Head of caudate nucleus (tissue), 42 donors: ENCODE measurements at regions of chr4 and their contacts with region 1.

Region 1: GRCh38 chr4:52376132-52376704 is 282.9 kb downstream of the USP46 start:
- DNase-seq: peak in 18 of 42 donors; percentile 7 to 70 (median 40)

Region 2: DNA sequence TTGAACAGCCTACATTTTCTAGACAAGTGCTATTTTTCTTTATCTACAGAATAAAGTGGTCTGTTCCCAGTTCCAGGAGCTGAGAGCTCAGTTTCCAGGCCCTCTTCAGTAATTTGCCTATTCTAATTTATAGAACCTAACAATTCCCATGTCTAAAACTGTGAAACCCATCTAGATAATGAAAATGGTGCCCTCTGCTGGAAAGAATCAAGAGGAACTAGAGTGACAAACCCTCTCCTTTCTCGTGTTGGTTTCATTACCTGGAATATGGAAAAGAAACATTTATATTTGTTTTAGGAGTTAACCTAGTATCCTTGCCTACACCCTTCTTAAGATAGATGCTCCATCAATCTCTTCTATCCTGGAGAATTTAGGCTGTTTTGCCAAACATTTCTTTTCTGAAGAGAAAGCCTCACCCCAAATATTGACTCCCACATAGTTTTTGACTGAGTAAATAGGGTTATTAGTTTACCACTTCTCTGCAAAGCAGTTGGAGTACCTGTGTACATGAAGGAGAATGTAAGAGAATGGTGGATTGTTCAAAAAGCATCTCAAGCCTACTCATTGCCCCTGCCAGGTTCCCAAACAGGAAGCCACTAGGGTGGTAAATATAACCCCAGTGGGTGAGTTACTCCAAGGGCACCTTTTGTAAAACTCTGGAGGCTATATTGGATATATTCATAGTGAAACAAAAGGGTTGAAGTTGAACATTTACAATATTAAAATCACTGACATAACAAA is 607.5 kb after region 1 on chr4:
- intact Hi-C with region 1: loop called (anchors 2 kb)
- DNase-seq: peak in 11 of 42 donors; percentile 17 to 69 (median 45)